Activated CD4-positive, alpha-beta memory T cell treated with anti-CD3 and anti-CD28 coated beads for 36 hours (primary cell): ENCODE measurements at regions of chr6 and their contacts with region 1.

Region 1: DNA sequence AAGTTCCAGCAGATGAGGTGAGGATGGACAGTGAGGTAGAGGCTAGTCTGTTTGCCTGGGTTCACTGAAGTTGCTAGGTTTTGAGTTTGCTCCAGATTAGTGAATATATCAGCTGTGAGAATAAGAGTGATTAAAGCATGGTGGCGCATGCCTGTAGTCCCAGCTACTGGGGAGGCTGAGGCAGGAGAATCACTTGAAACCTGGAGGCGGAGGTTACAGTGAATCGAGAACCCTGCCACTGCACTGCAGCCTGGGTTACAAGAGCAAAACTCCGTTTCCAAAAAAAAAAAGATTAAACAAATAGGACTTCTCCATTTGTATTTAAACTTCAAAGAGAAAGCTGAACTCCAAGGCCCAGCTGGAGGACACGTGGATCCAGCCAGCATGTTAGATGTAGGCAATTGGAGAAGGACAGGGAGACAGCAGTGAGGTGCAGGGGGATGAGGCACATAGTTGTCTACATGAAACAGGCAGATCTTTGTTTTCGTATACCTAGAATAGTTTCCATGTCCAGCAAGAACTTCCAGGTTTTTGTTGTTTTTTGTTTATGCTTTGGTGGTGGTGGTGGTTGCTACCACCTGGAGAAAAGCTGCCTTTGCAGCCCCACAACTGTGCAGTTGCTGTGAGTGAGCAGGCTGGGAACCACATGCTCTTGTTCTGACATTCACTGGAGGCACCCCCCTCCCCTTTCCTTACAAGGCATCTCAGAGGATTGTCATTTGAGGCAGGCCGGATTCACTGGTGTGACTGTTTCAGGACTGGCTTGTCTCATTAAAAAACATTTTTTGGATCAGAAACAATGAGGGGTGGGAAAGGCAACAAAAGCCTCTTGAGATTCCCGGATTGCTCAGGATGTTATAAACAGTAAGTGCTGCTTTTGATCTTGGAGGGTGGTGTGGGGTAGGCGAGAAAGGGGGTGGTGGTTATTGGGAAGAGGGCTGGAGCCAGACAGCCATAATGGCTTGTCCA is 72.3 kb downstream of the JARID2 start:
- DNase-seq: peak; percentile 55
- H3K4me3 Mint-ChIP-seq: peak overlapping the region; percentile 20
- H3K27ac Mint-ChIP-seq: peak overlapping the region; percentile 67
- H3K4me1 Mint-ChIP-seq: peaks cover 96% of the 10 kb centered on the region
- H3K27me3 Mint-ChIP-seq: no peaks in the 10 kb centered on the region

Region 2: GRCh38 chr6:15305496-15305895 is 12.7 kb before region 1 on chr6:
- CTCF ChIA-PET with region 1: no interaction called
- POLR2A ChIA-PET with region 1: no interaction called
- intact Hi-C with region 1: loop called (anchors 1 kb)
- DNase-seq: no peak
- H3K4me3 Mint-ChIP-seq: no peak overlapping the region
- H3K27ac Mint-ChIP-seq: peak overlapping the region; percentile 72
- H3K4me1 Mint-ChIP-seq: peaks cover 75% of the 10 kb centered on the region
- H3K27me3 Mint-ChIP-seq: no peaks in the 10 kb centered on the region